Left ventricle myocardium inferior (tissue), 1 donor: ENCODE measurements at regions of chr6 and their contacts with region 1.

Region 1: DNA sequence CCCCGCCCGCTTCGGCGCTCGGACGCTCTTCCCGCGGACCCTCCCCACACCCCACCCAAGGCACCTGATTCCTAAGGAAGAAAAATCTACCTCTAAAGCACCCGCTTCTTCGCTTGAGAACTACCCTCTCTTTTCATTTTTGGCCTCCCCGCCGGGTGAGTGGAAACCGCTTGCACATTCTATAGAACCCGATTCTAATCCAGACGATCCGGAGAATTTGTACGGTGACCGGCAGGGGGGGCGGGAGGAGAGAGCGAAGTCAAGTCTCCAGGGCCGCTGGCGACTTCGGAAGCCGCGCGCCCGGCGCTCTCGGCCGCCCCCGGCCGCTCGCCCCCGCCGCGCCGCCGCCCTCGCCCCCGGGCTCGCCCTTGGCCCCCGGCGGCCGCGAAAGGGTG is at the start of gene RBM24:
- DNase-seq: peak; percentile 44
- H3K4me3 ChIP-seq: peak within 1 kb of the TSS; percentile 86
- H3K27ac ChIP-seq: peak within 1 kb of the TSS; percentile 96
- H3K4me1 ChIP-seq: peaks cover 49% of the 10 kb centered on the region
- H3K27me3 ChIP-seq: peaks cover 28% of the 10 kb centered on the region
- CTCF ChIP-seq: peak; percentile 24
- total RNA-seq, gene RBM24: 189 TPM

Region 2: DNA sequence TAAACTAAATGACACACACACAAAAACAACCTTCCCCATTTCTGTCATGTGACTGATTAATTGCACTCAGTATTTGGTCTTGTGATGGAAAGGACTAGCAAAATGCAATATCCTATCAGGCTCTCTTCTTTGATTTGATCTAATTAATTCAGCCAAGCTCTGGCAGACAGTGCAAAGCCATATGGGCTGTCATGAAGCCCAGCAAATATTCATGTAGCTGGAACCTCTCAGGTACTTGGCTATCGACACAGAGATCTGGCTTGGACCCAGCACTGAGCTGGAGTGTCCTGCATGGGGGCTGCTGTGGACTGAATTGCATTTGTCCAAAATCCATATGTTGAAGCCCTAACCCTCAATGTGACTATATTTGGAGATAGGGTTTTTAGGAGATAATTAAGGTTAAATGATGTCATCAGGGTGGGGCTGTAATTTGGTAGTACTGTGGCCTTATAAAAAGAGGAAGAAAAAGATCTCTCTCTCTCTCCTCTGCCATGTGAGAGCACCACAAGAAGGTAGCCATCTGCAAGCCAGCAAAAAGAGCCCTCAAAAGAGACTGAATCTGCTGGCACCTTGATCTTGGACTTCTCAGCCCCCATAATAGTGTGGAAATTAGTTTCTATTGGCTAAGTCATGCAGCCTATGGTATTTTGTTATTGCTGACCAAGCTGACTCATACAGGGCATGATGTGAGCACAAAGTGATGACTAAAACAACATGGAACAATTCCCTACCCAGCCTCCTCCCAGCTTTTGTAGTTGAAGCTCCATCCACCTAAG is 102.2 kb before region 1 on chr6:
- intact Hi-C with region 1: loop called (anchors 10 kb)
- DNase-seq: no peak
- H3K4me3 ChIP-seq: no peak overlapping the region
- H3K27ac ChIP-seq: no peak overlapping the region
- H3K4me1 ChIP-seq: peaks cover 8% of the 10 kb centered on the region
- H3K27me3 ChIP-seq: no peaks in the 10 kb centered on the region
- CTCF ChIP-seq: no peak

Region 3: GRCh38 chr6:17584241-17584803 is 303.2 kb after region 1 on chr6:
- intact Hi-C with region 1: loop called (anchors 10 kb)
- DNase-seq: no peak
- H3K4me3 ChIP-seq: peak overlapping the region; percentile 44
- H3K27ac ChIP-seq: peak overlapping the region; percentile 77
- H3K4me1 ChIP-seq: peaks cover 18% of the 10 kb centered on the region
- H3K27me3 ChIP-seq: no peaks in the 10 kb centered on the region
- CTCF ChIP-seq: peak; percentile 83